ENCODE measurements at regions of chr20 and their contacts with region 1.

Region 1: DNA sequence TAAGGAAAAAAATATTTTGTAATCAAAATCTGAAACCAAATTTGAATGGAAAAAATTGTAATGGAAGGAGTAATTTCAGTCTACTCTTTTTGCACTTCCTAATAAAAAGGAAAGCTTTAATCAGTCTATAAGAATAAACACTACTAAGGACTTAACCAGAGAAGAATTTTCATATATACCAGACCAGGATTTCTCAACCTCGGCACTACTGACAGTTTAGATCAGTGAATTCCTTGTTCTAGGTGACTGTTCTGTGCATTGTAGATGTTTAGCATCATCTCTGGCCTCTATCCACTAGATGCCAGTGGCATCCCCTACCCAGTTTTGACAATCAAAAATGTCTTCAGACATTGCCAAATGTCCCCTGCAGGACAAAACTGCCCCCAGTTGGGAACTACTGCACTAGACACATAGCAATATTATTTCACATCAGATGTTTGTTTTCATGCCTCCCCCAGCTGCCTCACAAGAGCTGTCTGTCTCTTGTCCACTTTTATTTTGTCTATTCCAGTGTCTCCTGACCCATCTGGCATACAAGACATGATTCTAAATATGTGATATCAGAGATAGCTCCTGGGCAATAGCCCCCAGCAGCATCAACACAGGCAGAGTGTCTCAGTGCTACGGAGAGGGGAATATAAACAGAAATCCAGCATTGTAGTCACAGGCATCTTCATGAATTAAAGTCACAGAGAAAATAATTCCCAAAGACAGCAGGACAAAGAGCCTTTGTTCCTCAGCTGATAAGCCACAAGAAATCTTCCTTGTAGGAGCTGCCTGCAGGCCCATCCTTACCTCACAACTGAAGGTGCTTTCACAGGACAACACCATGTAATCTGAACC is 27.0 kb downstream of the DNAAF9 start:
- DNase-seq: no peak
- H3K4me3 ChIP-seq: no peak overlapping the region
- H3K27ac ChIP-seq: no peak overlapping the region
- H3K4me1 ChIP-seq: peaks cover 0 to 4% (median 0%) of the 10 kb centered on the region in 4 experiments; a peak in 1 of 7 replicates
- H3K27me3 ChIP-seq: 0 out of 7 replicates have a peak, but pooled peaks cover 0 to 2% (median 0%) of the 10 kb centered on the region in 4 experiments
- CTCF ChIP-seq: no peak
- EP300 ChIP-seq: no peak
- POLR2A ChIP-seq: no peak
- RAD21 ChIP-seq: no peak

Region 2: GRCh38 chr20:3273371-3273770 is 107.1 kb before region 1 on chr20:
- CTCF ChIA-PET with region 1: no interaction called
- POLR2A ChIA-PET with region 1: no interaction called
- DNase-seq: no peak
- H3K4me3 ChIP-seq: no peak overlapping the region
- H3K27ac ChIP-seq: no peak overlapping the region
- H3K4me1 ChIP-seq: no peaks in the 10 kb centered on the region
- H3K27me3 ChIP-seq: no peaks in the 10 kb centered on the region
- CTCF ChIP-seq: no peak
- EP300 ChIP-seq: peak in 1 of 2 experiments; percentile 52; a peak in 1 of 3 replicates
- POLR2A ChIP-seq: no peak
- RAD21 ChIP-seq: no peak

Region 3: GRCh38 chr20:3358676-3359340 is 21.6 kb before region 1 on chr20:
- CTCF ChIA-PET with region 1: interaction called, 10 read pairs
- POLR2A ChIA-PET with region 1: interaction called, 3 read pairs
- DNase-seq: no peak
- H3K4me3 ChIP-seq: no peak overlapping the region
- H3K27ac ChIP-seq: no peak overlapping the region
- H3K4me1 ChIP-seq: no peaks in the 10 kb centered on the region
- H3K27me3 ChIP-seq: no peaks in the 10 kb centered on the region
- CTCF ChIP-seq: peak in 1 of 3 experiments; percentile 19; a peak in 1 of 4 replicates
- EP300 ChIP-seq: no peak
- POLR2A ChIP-seq: no peak
- RAD21 ChIP-seq: peak; percentile 53 to 58

Region 4: GRCh38 chr20:3557237-3557785 is 176.9 kb after region 1 on chr20:
- CTCF ChIA-PET with region 1: no interaction called
- POLR2A ChIA-PET with region 1: no interaction called
- DNase-seq: no peak
- H3K4me3 ChIP-seq: no peak overlapping the region
- H3K27ac ChIP-seq: no peak overlapping the region
- H3K4me1 ChIP-seq: no peaks in the 10 kb centered on the region
- H3K27me3 ChIP-seq: no peaks in the 10 kb centered on the region
- CTCF ChIP-seq: no peak
- EP300 ChIP-seq: no peak
- POLR2A ChIP-seq: no peak
- RAD21 ChIP-seq: no peak

Measured in H1 (cell line).